IMR-90 (cell line): ENCODE measurements at regions of chr3 and their contacts with region 1.

Region 1: GRCh38 chr3:44782891-44783290 is 21.3 kb downstream of the KIF15 start:
- DNase-seq: no peak
- ATAC-seq: no peak
- H3K4me3 ChIP-seq: no peak overlapping the region
- H3K27ac ChIP-seq: no peak overlapping the region
- H3K4me1 ChIP-seq: no peaks in the 10 kb centered on the region
- H3K27me3 ChIP-seq: no peaks in the 10 kb centered on the region
- CTCF ChIP-seq: no peak
- POLR2A ChIP-seq: no peak
- RAD21 ChIP-seq: no peak

Region 2: DNA sequence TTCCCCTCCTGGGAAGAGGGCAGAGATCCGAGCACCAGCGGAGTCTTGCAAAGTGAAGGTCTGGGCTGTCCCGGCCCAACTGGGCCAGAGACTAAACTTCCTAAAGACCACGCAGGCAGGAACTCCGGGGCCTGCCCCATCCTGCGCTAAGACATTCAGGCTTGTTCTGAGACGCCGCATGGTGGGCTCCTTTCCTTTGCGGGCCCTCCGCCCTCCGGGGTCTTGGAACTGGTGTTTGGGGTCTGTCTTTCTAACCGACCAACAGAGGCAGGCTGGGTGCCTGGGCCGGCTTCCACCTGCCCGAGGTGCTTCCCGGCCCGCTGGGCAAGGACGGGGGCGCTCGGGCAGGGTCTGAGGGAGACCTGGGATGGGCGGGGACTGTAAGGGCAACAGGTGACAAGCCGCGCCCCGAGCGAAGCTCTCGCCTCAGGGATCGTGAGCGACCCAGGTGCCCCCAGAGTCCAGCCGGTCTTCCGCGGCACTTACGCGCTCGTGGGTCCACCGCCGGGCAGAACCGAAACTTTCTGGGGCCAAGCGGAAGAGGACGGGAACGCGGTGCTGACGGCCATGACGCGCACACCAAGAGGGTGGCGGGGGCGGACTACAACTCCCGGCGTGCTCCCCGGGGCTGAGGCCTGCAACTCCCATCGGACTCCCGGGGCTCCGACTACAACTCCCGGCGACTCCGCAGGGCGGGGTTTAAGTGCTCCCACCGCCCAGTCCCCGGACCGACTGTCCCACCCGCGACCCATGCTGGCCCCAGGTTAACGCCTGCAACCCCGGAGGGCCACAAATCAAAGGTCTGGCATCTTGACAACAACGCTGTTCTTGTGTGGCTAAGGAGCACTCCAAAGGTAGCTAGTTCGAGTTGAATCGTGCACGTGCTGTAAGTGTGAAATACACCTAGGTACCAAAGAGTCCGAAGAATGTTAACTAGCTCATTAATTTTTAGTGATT is 1212.6 kb after region 1 on chr3 and contains the start of gene FYCO1:
- CTCF ChIA-PET with region 1: no interaction called
- POLR2A ChIA-PET with region 1: interaction called, 11 read pairs
- dilution Hi-C with region 1: no loop called
- in situ Hi-C with region 1: no loop called
- intact Hi-C with region 1: no loop called
- DNase-seq: peak; percentile 86
- ATAC-seq: peak; percentile 99
- H3K4me3 ChIP-seq: peak within 1 kb of the TSS; percentile 77
- H3K27ac ChIP-seq: peak within 1 kb of the TSS; percentile 60
- H3K4me1 ChIP-seq: peaks cover 11% of the 10 kb centered on the region
- H3K27me3 ChIP-seq: no peaks in the 10 kb centered on the region; the same call in 1 of the 2 replicates
- CTCF ChIP-seq: no peak
- POLR2A ChIP-seq: peak; percentile 28; the same call in 1 of the 2 replicates
- RAD21 ChIP-seq: no peak
- total RNA-seq, gene FYCO1: 16.1 and 20.1 TPM in 2 replicates